Prostate gland (tissue), 2 donors: ENCODE measurements at regions of chr4 and their contacts with region 1.

Region 1: DNA sequence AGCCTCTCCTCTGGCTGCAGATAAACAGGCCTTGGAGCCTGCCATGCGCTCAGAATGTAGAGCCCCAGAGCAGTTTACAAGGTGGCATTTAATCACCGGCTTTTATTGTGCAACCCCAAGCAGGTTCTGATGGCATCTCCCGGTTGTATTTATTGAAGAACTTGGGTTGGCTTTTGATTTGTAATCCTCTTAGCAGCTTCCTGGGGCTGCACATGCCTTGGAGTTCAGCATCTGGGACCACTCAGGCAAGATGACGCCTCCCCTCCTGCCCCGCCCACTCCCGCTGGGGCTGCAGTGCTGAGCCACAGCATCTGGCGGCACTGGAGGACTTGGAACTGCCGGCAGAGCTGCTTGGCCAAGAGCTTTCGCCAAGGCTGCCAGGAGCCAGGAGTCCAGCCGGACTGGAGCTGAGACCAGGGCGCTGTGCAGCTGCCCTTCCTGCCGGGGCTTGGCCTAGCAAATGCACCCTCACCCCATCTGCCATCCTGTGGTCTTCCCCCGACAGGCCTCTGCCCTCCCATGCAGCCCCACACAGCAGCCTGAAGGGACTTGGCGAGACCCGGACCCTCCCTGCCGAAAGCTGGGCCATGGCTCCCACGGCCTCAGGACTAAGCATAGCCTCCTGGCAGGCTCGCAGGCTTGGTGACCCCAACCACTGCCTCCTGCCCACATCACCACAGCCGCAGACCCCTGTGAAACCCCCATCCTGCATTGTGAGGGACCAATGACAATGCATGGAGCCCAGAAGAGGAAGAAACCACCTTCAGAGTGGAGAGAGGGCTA is 5.4 kb downstream of the HTRA3 start:
- DNase-seq: peak; percentile 71
- H3K4me3 ChIP-seq: no peak overlapping the region
- H3K27ac ChIP-seq: peak overlapping the region; percentile 11 to 53
- H3K4me1 ChIP-seq: peaks cover 25% of the 10 kb centered on the region
- H3K27me3 ChIP-seq: no peaks in the 10 kb centered on the region
- CTCF ChIP-seq: peak in 2 of 4 experiments; percentile 33 to 44
- POLR2A ChIP-seq: no peak

Region 2: GRCh38 chr4:8308856-8309771 is 34.2 kb after region 1 on chr4:
- intact Hi-C with region 1: loop called (anchors 5 kb)
- DNase-seq: no peak
- H3K4me3 ChIP-seq: no peak overlapping the region
- H3K27ac ChIP-seq: no peak overlapping the region
- H3K4me1 ChIP-seq: no peaks in the 10 kb centered on the region
- H3K27me3 ChIP-seq: no peaks in the 10 kb centered on the region
- CTCF ChIP-seq: no peak
- POLR2A ChIP-seq: no peak

Region 3: DNA sequence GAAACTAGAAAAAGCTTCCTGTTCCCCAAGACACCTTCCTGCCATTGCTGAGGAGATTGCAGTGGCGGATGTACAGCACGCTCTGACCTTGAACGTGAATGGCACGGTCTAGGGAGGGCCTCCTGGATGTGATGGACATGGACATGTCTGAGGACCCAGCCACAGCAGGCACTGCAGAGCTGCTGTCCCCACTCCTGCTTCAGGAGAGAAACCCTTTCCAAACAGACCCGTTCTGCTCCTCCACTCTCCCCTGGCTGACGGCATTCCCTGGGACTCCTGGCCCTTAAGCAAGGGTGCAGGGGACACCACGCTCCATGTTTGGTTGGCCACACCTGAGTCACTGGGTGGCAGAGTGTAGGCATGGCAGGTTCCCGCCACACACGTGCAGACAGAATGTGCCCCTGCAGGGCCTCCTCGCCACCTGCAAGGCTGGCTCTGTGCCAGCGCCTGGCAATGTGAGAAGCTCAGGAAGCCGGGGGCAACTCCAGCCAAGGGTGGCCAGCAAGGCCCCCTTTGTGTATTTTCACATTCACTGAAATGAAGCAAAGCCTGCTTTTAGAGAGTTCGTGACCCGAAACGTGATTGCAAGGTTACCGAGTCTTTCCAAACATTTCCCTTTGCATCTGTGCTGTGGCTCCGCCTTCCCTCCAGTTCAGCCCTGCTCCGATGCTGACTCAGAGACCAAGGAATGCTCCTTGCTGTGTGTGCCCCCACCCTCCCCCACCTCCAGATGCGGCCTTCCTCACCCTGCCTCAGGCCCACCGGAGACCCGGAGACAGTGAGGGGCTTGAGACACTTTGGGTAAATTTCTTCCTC is 40.7 kb after region 1 on chr4:
- intact Hi-C with region 1: loop called (anchors 5 kb)
- DNase-seq: peak; percentile 51
- H3K4me3 ChIP-seq: no peak overlapping the region
- H3K27ac ChIP-seq: peak overlapping the region; percentile 5 to 13
- H3K4me1 ChIP-seq: no peaks in the 10 kb centered on the region
- H3K27me3 ChIP-seq: no peaks in the 10 kb centered on the region
- CTCF ChIP-seq: no peak
- POLR2A ChIP-seq: no peak